ENCODE measurements at regions of chr7 and their contacts with region 1.

Region 1: GRCh38 chr7:121337398-121337797 is 8.6 kb downstream of the WNT16 start:
- DNase-seq: peak in 1 of 4 experiments; percentile 47
- ATAC-seq: peak; percentile 89
- H3K4me3 ChIP-seq: no peak overlapping the region
- H3K27ac ChIP-seq: no peak overlapping the region
- H3K4me1 ChIP-seq: no peaks in the 10 kb centered on the region
- H3K27me3 ChIP-seq: peaks cover 0 to 15% of the 10 kb centered on the region in 2 experiments; a peak in 2 of 5 replicates
- CTCF ChIP-seq: peak; percentile 43 to 73 (median 68); a peak in 5 of 6 replicates
- EP300 ChIP-seq: no peak
- POLR2A ChIP-seq: no peak
- RAD21 ChIP-seq: peak; percentile 77 to 90

Region 2: GRCh38 chr7:120941064-120941463 is 396.3 kb before region 1 on chr7:
- CTCF ChIA-PET with region 1: no interaction called
- POLR2A ChIA-PET with region 1: no interaction called
- in situ Hi-C with region 1: no loop called
- intact Hi-C with region 1: loop called (anchors 5 kb)
- DNase-seq: peak in 1 of 4 experiments; percentile 23
- ATAC-seq: peak; percentile 60
- H3K4me3 ChIP-seq: no peak overlapping the region
- H3K27ac ChIP-seq: no peak overlapping the region
- H3K4me1 ChIP-seq: no peaks in the 10 kb centered on the region
- H3K27me3 ChIP-seq: no peaks in the 10 kb centered on the region; a peak in 1 of 5 replicates
- CTCF ChIP-seq: peak in 2 of 3 experiments; percentile 18 to 58; a peak in 3 of 6 replicates
- EP300 ChIP-seq: no peak
- POLR2A ChIP-seq: no peak
- RAD21 ChIP-seq: peak; percentile 47 to 62

Region 3: GRCh38 chr7:121107923-121108498 is 229.4 kb before region 1 on chr7:
- CTCF ChIA-PET with region 1: no interaction called
- POLR2A ChIA-PET with region 1: no interaction called
- in situ Hi-C with region 1: no loop called
- intact Hi-C with region 1: loop called (anchors 5 kb)
- DNase-seq: peak; percentile 67 to 82 (median 79)
- ATAC-seq: peak; percentile 99
- H3K4me3 ChIP-seq: no peak overlapping the region
- H3K27ac ChIP-seq: no peak overlapping the region
- H3K4me1 ChIP-seq: no peaks in the 10 kb centered on the region
- H3K27me3 ChIP-seq: no peaks in the 10 kb centered on the region
- CTCF ChIP-seq: peak; percentile 61 to 95 (median 83)
- EP300 ChIP-seq: no peak
- POLR2A ChIP-seq: no peak
- RAD21 ChIP-seq: peak; percentile 78 to 89

Region 4: GRCh38 chr7:121126801-121127534 is 210.4 kb before region 1 on chr7:
- CTCF ChIA-PET with region 1: interaction called, 10 read pairs
- POLR2A ChIA-PET with region 1: no interaction called
- in situ Hi-C with region 1: no loop called
- intact Hi-C with region 1: loop called (anchors 5 kb)
- DNase-seq: no peak
- ATAC-seq: no peak
- H3K4me3 ChIP-seq: no peak overlapping the region
- H3K27ac ChIP-seq: no peak overlapping the region
- H3K4me1 ChIP-seq: no peaks in the 10 kb centered on the region
- H3K27me3 ChIP-seq: no peaks in the 10 kb centered on the region
- CTCF ChIP-seq: peak in 1 of 3 experiments; percentile 32; a peak in 2 of 6 replicates
- EP300 ChIP-seq: no peak
- POLR2A ChIP-seq: no peak
- RAD21 ChIP-seq: peak; percentile 22 to 41; a peak in 1 of 4 replicates

Region 5: DNA sequence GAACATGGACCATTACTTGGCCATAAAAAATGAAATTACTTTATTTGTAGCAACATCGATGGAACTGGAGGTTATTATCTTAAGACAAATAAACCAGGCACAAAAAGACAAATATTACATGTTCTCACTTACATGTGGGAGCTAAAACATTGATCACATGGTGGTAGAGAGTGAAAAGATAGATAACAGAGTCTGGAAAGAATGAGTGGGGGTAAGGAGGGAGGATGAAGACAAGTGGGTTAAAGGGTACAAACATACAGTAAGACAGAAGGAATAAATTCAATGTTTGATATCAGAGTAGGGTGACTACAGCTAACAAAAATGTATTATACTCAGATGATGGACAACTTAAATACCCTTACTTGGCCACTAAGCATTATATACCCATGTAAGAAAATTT is 108.6 kb before region 1 on chr7:
- CTCF ChIA-PET with region 1: no interaction called
- POLR2A ChIA-PET with region 1: no interaction called
- in situ Hi-C with region 1: no loop called
- intact Hi-C with region 1: no loop called
- DNase-seq: no peak
- ATAC-seq: no peak
- H3K4me3 ChIP-seq: no peak overlapping the region
- H3K27ac ChIP-seq: no peak overlapping the region
- H3K4me1 ChIP-seq: no peaks in the 10 kb centered on the region
- H3K27me3 ChIP-seq: no peaks in the 10 kb centered on the region
- CTCF ChIP-seq: no peak
- EP300 ChIP-seq: no peak
- POLR2A ChIP-seq: peak; percentile 41; the same call in 1 of the 2 replicates
- RAD21 ChIP-seq: no peak

Region 6: GRCh38 chr7:121369462-121369861 is 32.1 kb after region 1 on chr7:
- CTCF ChIA-PET with region 1: no interaction called
- POLR2A ChIA-PET with region 1: no interaction called
- in situ Hi-C with region 1: no loop called
- intact Hi-C with region 1: no loop called
- DNase-seq: no peak
- ATAC-seq: no peak; the same call in 2 of the 3 replicates
- H3K4me3 ChIP-seq: no peak overlapping the region
- H3K27ac ChIP-seq: no peak overlapping the region
- H3K4me1 ChIP-seq: no peaks in the 10 kb centered on the region
- H3K27me3 ChIP-seq: no peaks in the 10 kb centered on the region
- CTCF ChIP-seq: no peak
- EP300 ChIP-seq: no peak
- POLR2A ChIP-seq: no peak
- RAD21 ChIP-seq: no peak

Measured in K562 (cell line).